Activated B cell treated with CpG ODN at 0.5 μM for 24 hours (primary cell): ENCODE measurements at regions of chr6 and their contacts with region 1.

Region 1: DNA sequence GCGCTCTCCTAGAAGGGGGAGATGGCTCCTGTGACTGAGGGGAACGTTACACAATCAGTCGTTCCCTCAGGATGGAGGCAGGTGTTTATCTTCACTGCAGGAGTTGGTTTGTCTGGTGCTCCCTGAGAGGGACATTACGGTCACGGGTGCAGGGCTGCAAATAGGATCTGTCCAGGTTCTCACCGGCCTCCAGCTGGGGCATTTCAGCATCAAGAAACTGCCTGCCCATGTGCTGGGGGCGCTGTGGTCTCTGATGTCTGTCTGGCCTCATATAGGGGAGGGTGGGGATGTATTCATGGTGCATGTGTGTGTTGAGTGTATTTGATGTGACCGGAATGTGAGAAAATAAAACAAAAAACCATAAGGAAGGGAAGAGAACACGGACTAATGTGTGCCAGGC is 77.1 kb downstream of the TBC1D7 start:
- DNase-seq: no peak
- ATAC-seq: no peak
- H3K4me3 Mint-ChIP-seq: no peak overlapping the region
- H3K27ac Mint-ChIP-seq: no peak overlapping the region
- H3K4me1 Mint-ChIP-seq: peaks cover 41% of the 10 kb centered on the region
- H3K27me3 Mint-ChIP-seq: no peaks in the 10 kb centered on the region
- CTCF ChIP-seq: no peak

Region 2: DNA sequence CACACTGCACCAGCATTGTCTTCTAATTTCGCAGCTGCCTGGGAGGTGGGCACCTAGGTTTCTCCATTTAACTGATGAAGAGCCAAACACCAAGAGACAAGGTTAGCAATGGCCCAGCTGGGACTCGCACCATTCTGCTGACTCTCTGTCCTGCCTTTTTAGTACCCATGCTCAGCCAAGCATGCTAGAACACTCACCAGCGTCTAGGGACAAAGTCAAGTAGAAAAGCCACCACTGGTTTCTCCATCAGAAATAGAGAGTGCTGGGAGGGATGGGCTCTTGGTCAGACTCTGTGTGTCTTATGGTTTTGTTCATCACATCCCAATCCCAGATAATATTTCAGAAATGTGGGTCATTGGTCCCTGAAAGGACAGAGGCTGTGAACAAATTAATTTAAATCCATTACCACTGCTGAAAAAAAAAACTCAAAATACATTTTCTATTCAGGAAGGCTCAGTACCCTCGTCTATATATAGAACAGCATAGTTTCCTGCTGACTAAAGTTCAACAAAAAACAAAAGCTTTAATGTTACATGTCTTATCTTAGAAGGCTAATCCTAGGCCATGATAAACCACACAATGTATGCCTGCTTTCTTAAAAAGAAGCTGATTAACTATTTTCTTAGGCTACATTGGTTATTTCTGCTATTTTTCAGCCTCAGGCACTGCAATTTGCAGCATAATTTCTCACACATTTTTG is 33.9 kb before region 1 on chr6:
- CTCF ChIA-PET with region 1: no interaction called
- POLR2A ChIA-PET with region 1: interaction called, 11 read pairs
- intact Hi-C with region 1: no loop called
- DNase-seq: no peak
- ATAC-seq: no peak
- H3K4me3 Mint-ChIP-seq: no peak overlapping the region
- H3K27ac Mint-ChIP-seq: no peak overlapping the region
- H3K4me1 Mint-ChIP-seq: peaks cover 22% of the 10 kb centered on the region
- H3K27me3 Mint-ChIP-seq: no peaks in the 10 kb centered on the region
- CTCF ChIP-seq: no peak